Activated CD4-positive, alpha-beta T cell treated with anti-CD3 and anti-CD28 coated beads for 36 hours (primary cell): ENCODE measurements at regions of chr11 and their contacts with region 1.

Region 1: GRCh38 chr11:87819151-87819550 is 356.1 kb downstream of the RAB38 start:
- DNase-seq: no peak
- ATAC-seq: no peak
- H3K4me3 Mint-ChIP-seq: no peak overlapping the region
- H3K27ac Mint-ChIP-seq: no peak overlapping the region
- H3K4me1 Mint-ChIP-seq: no peaks in the 10 kb centered on the region
- H3K27me3 Mint-ChIP-seq: no peaks in the 10 kb centered on the region

Region 2: DNA sequence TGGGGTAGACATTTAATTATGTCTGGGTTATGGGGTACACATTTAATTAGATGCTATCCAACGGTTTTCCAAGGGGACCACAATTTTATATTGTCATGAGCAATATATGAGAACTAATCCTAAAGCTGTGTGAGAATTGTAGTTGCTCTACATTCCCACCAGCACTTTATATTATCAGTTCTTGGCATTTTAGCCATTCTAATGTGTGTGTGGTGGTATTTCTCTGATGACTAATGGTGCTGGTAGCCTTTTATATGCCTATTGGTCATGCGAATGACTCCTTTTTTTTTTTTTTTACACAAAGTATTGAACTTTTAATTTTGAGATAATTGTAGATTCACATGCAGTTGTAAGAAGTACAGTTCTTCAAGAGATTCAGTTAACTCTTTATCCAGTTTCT is 755.2 kb before region 1 on chr11:
- CTCF ChIA-PET with region 1: no interaction called
- POLR2A ChIA-PET with region 1: no interaction called
- intact Hi-C with region 1: no loop called
- DNase-seq: no peak
- ATAC-seq: no peak
- H3K4me3 Mint-ChIP-seq: no peak overlapping the region
- H3K27ac Mint-ChIP-seq: no peak overlapping the region
- H3K4me1 Mint-ChIP-seq: peaks cover 10% of the 10 kb centered on the region
- H3K27me3 Mint-ChIP-seq: no peaks in the 10 kb centered on the region

Region 3: DNA sequence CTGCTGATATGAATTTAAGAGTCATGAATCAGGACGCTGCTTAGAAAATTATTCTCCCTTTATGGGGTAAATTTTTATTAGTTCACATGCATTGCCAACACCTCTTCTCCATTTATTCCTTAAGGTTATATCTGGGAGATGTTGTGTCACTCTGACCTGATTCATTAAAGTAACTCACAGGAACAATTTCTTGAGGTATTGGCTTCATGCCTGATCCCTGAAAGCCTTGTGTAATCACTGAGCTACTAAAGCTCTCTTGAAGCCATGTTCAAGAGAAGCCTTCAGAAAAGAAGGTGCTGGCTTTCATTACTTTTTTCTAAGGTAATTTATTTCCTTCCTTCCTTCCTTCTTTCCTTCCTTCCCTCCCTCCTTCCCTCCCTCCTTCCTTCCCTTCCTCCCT is 64.5 kb before region 1 on chr11:
- CTCF ChIA-PET with region 1: no interaction called
- POLR2A ChIA-PET with region 1: no interaction called
- intact Hi-C with region 1: no loop called
- DNase-seq: no peak
- ATAC-seq: no peak
- H3K4me3 Mint-ChIP-seq: no peak overlapping the region
- H3K27ac Mint-ChIP-seq: no peak overlapping the region
- H3K4me1 Mint-ChIP-seq: no peaks in the 10 kb centered on the region
- H3K27me3 Mint-ChIP-seq: no peaks in the 10 kb centered on the region

Region 4: GRCh38 chr11:87769661-87770060 is 49.5 kb before region 1 on chr11:
- CTCF ChIA-PET with region 1: no interaction called
- POLR2A ChIA-PET with region 1: no interaction called
- intact Hi-C with region 1: loop called in 1 of 2 experiments (anchors 5 kb)
- DNase-seq: no peak
- ATAC-seq: no peak
- H3K4me3 Mint-ChIP-seq: no peak overlapping the region
- H3K27ac Mint-ChIP-seq: no peak overlapping the region
- H3K4me1 Mint-ChIP-seq: no peaks in the 10 kb centered on the region
- H3K27me3 Mint-ChIP-seq: no peaks in the 10 kb centered on the region